GM12878 (cell line): ENCODE measurements at regions of chr6 and their contacts with region 1.

Region 1: GRCh38 chr6:133553652-133554051 is 312.5 kb downstream of the EYA4 start:
- DNase-seq: no peak
- ATAC-seq: peak; percentile 79
- H3K4me3 ChIP-seq: no peak overlapping the region
- H3K27ac ChIP-seq: no peak overlapping the region
- H3K4me1 ChIP-seq: no peaks in the 10 kb centered on the region
- H3K27me3 ChIP-seq: peaks cover 0 to 2% of the 10 kb centered on the region in 2 experiments; a peak in 1 of 4 replicates
- CTCF ChIP-seq: peak; percentile 43 to 62 (median 58); a peak in 5 of 6 replicates
- EP300 ChIP-seq: no peak
- POLR2A ChIP-seq: no peak
- RAD21 ChIP-seq: peak; percentile 64

Region 2: DNA sequence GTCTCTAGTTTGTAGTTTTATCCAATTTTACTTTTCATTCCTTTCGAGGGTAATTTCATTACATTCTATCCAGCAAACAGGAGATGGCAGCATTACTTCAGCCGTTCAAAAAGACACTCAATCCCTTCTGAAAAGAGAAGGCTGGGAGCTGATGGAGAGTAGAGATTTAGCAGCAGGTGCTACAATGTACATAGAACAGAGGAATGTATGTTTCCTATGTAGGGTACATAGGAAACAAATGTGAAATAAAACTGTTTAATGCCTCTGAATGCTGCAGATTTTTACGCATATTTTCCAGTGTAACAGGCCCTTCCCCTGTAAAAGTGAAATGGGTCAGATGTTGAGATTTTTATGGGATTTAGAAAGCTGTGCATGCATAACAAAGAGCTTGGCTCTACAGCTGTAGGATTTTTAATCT is 723.3 kb before region 1 on chr6:
- CTCF ChIA-PET with region 1: no interaction called
- POLR2A ChIA-PET with region 1: no interaction called
- RAD21 ChIA-PET with region 1: no interaction called
- SMC1A ChIA-PET with region 1: no interaction called
- in situ Hi-C with region 1: no loop called
- intact Hi-C with region 1: loop called (anchors 2 kb)
- DNase-seq: no peak
- ATAC-seq: peak; percentile 55
- H3K4me3 ChIP-seq: no peak overlapping the region
- H3K27ac ChIP-seq: no peak overlapping the region
- H3K4me1 ChIP-seq: no peaks in the 10 kb centered on the region
- H3K27me3 ChIP-seq: no peaks in the 10 kb centered on the region
- CTCF ChIP-seq: peak; percentile 25 to 53 (median 32); a peak in 4 of 6 replicates
- EP300 ChIP-seq: no peak
- POLR2A ChIP-seq: no peak
- RAD21 ChIP-seq: peak; percentile 82

Region 3: DNA sequence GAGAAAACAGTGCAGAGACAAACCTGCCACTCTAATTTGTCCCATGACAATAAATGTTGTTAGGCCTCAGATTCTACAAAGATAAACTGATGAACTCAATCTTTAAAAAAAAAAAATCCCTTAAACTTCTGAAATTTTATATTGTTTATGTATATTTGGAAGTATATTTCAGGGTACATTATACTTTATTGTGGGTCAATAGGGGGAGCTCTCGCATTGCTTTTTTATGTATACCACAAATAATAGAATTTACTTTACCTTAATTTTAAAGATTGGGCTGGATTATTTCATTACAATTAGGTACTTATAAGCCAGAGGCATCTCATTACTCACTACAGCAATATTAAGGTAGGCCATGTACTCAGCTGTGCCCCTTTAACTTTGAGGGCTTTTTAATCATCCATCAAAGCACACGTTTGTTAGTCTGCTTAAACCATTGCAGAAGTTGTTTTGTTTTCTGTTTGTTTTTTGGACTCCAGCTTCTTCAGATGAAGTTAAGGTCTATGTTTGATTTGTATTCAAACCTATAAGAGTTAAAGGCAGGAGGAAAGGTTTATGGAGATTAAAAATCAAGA is 368.8 kb before region 1 on chr6:
- CTCF ChIA-PET with region 1: interaction called, 5 read pairs
- POLR2A ChIA-PET with region 1: no interaction called
- RAD21 ChIA-PET with region 1: no interaction called
- SMC1A ChIA-PET with region 1: interaction called, 3 read pairs
- in situ Hi-C with region 1: loop called (anchors 10 kb)
- intact Hi-C with region 1: loop called (anchors 2 kb)
- DNase-seq: no peak
- ATAC-seq: no peak
- H3K4me3 ChIP-seq: no peak overlapping the region
- H3K27ac ChIP-seq: no peak overlapping the region
- H3K4me1 ChIP-seq: no peaks in the 10 kb centered on the region
- H3K27me3 ChIP-seq: no peaks in the 10 kb centered on the region; a peak in 1 of 4 replicates
- CTCF ChIP-seq: peak; percentile 31 to 47 (median 43); a peak in 3 of 6 replicates
- EP300 ChIP-seq: no peak
- POLR2A ChIP-seq: no peak
- RAD21 ChIP-seq: peak; percentile 27; the same call in 1 of the 2 replicates

Region 4: DNA sequence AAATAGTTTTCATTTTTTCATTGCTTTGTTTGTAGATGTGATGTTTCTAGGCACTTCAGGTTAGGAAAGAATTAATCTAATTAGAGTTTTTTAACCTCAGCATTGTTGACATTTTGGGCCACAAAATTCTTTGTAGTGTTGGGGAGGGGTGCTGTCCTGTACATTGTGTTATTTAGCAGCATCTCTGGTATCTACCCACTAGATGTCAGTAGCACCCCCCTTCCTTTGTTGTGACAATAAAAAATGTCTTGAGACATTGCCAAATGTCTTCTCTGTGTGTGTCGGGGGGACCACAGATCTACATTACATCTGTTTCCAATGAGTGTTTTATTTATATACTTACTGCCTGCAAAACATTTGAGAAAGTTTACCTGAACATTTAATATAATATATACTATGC is 266.9 kb before region 1 on chr6:
- CTCF ChIA-PET with region 1: no interaction called
- POLR2A ChIA-PET with region 1: no interaction called
- RAD21 ChIA-PET with region 1: no interaction called
- SMC1A ChIA-PET with region 1: no interaction called
- in situ Hi-C with region 1: no loop called
- intact Hi-C with region 1: loop called (anchors 10 kb)
- DNase-seq: no peak
- ATAC-seq: peak; percentile 44; the same call in 2 of the 3 replicates
- H3K4me3 ChIP-seq: no peak overlapping the region
- H3K27ac ChIP-seq: no peak overlapping the region
- H3K4me1 ChIP-seq: no peaks in the 10 kb centered on the region
- H3K27me3 ChIP-seq: no peaks in the 10 kb centered on the region; a peak in 1 of 4 replicates
- CTCF ChIP-seq: peak; percentile 16 to 40 (median 29); a peak in 4 of 6 replicates
- EP300 ChIP-seq: no peak
- POLR2A ChIP-seq: no peak
- RAD21 ChIP-seq: peak; percentile 27

Region 5: GRCh38 chr6:133609404-133610270 is 56.0 kb after region 1 on chr6:
- CTCF ChIA-PET with region 1: no interaction called
- POLR2A ChIA-PET with region 1: no interaction called
- RAD21 ChIA-PET with region 1: no interaction called
- SMC1A ChIA-PET with region 1: no interaction called
- in situ Hi-C with region 1: no loop called
- intact Hi-C with region 1: no loop called
- DNase-seq: no peak
- ATAC-seq: no peak
- H3K4me3 ChIP-seq: no peak overlapping the region
- H3K27ac ChIP-seq: no peak overlapping the region
- H3K4me1 ChIP-seq: no peaks in the 10 kb centered on the region
- H3K27me3 ChIP-seq: no peaks in the 10 kb centered on the region
- CTCF ChIP-seq: no peak
- EP300 ChIP-seq: no peak
- POLR2A ChIP-seq: no peak
- RAD21 ChIP-seq: no peak

Region 6: DNA sequence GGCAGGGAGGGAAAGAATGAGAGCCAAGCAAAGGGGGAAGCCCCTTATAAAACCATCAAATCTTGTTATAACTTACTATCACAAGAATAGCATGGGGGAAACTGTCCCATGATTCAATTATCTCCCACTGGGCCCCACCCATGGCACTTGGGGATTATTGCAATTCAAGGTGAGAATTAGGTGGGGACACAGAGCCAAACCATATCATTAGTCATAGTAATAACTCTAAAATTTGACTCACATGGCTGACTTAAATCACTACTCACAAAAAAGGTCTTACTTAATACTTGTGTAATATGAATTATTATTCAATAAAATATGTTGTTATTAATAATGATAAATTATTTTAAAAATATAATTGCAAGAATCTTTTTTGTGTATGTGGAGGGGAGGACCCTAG is 157.2 kb after region 1 on chr6:
- CTCF ChIA-PET with region 1: no interaction called
- POLR2A ChIA-PET with region 1: no interaction called
- RAD21 ChIA-PET with region 1: no interaction called
- SMC1A ChIA-PET with region 1: no interaction called
- in situ Hi-C with region 1: no loop called
- intact Hi-C with region 1: no loop called
- DNase-seq: no peak
- ATAC-seq: no peak
- H3K4me3 ChIP-seq: no peak overlapping the region
- H3K27ac ChIP-seq: no peak overlapping the region
- H3K4me1 ChIP-seq: no peaks in the 10 kb centered on the region
- H3K27me3 ChIP-seq: no peaks in the 10 kb centered on the region
- CTCF ChIP-seq: no peak
- EP300 ChIP-seq: no peak
- POLR2A ChIP-seq: no peak
- RAD21 ChIP-seq: no peak